Heart right ventricle (tissue), 16 donors: ENCODE measurements at regions of chr10 and their contacts with region 1.

Region 1: DNA sequence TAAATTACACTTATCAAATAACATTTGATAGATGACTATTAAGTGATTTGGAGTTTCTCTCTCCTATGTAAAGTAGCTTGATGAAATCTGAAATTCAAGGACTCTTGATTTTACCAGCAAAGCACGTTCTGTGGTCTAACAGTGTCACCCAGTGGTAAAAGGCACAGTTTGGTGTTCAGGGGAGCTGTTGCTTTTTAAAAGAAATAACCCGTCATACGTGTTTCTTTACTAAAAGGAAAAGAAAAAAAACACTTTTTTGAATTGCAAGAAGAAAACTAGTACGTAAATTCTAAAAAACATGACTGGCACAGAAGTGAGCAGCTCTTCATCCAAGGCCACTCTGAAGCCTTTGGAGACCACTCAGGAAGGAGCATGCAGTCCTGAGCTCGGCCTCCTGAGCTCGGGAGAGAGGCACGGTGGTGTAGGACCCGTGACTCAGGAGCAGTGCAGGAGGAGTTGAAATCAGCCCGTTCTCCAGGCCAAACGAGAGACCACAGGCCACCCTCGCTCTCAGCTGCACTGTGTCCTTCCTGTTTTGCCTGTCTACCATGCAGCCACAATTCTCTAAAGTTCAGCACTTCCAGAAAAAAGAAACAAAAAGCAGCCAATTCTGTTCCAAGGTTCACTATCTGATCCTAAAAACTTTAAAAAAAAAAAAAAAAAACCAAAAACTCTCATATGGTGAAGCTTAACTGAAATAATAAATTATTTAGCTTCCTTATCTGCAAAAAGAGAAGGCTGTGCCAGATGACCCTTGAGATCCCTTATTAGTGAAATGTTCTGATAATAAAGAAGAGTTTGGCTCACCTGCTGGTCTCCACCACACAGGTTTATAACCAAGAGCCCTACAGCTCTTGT is 212.6 kb upstream of the FRMD4A start:
- DNase-seq: peak in 1 of 2 donors; percentile 37
- ATAC-seq: peak; percentile 44 to 88 (median 79)
- H3K4me3 ChIP-seq: no peak overlapping the region
- H3K27ac ChIP-seq: peak overlapping the region in 8 of 10 donors; percentile 4 to 79 (median 42)
- H3K4me1 ChIP-seq: peaks cover 0 to 46% (median 8%) of the 10 kb centered on the region in 9 donors
- H3K27me3 ChIP-seq: no peaks in the 10 kb centered on the region
- CTCF ChIP-seq: peak in 6 of 9 donors; percentile 18 to 53 (median 39)

Region 2: GRCh38 chr10:14191871-14192270 is 351.4 kb before region 1 on chr10:
- intact Hi-C with region 1: loop called in 1 of 10 experiments (anchors 10 kb)
- DNase-seq: no peak
- ATAC-seq: no peak
- H3K4me3 ChIP-seq: no peak overlapping the region
- H3K27ac ChIP-seq: no peak overlapping the region
- H3K4me1 ChIP-seq: no peaks in the 10 kb centered on the region
- H3K27me3 ChIP-seq: peaks cover 0 to 41% (median 13%) of the 10 kb centered on the region in 7 donors
- CTCF ChIP-seq: no peak